Caco-2 (cell line): ENCODE measurements at regions of chr16 and their contacts with region 1.

Region 1: GRCh38 chr16:14529010-14529669 is 100.9 kb downstream of the PARN start:
- DNase-seq: peak; percentile 67 to 76
- H3K4me3 ChIP-seq: no peak overlapping the region
- H3K4me3 Mint-ChIP-seq: peak overlapping the region; percentile 32
- H3K27ac Mint-ChIP-seq: no peak overlapping the region
- H3K4me1 ChIP-seq: no peaks in the 10 kb centered on the region
- H3K4me1 Mint-ChIP-seq: peaks cover 6% of the 10 kb centered on the region
- H3K27me3 ChIP-seq: no peaks in the 10 kb centered on the region
- H3K27me3 Mint-ChIP-seq: no peaks in the 10 kb centered on the region
- CTCF ChIP-seq: peak; percentile 68 to 79

Region 2: DNA sequence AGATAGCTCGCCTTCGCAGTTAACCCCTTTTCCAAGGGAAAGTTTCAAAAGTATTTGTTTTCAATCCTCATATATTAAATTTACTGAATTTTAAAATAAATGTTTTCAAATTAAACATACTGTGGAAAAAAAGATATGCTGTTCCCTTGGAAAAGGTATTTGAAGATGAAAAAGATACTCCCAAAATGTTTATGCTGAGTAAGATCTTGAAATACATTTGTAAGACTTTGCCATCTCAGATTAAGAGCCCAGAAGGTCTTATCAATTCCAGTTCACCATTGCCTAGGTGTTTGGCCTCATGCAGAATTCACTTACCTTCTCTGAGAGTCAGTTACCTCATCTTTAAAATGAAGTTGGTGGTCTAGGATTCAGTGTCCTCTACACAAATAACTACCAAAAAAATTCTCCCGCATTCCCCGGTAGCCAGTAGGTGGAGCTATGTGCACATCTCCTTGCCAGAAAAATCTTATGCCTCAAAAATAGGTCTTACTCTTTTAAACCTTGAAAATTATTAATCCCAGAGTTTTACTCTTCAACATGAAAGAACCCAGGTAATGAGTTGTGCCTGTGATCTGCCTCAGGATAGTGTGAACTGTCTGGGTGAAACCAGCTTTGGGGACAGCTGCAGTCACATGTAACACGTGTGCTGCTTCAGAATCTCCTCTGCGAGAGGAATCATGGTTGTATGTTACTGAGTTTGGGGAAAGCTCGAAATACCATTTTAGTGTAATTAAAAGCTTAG is 279.7 kb before region 1 on chr16:
- CTCF ChIA-PET with region 1: no interaction called
- POLR2A ChIA-PET with region 1: no interaction called
- intact Hi-C with region 1: loop called (anchors 1 kb)
- DNase-seq: peak in 1 of 2 experiments; percentile 46
- H3K4me3 ChIP-seq: no peak overlapping the region
- H3K4me3 Mint-ChIP-seq: no peak overlapping the region
- H3K27ac Mint-ChIP-seq: no peak overlapping the region
- H3K4me1 ChIP-seq: no peaks in the 10 kb centered on the region
- H3K4me1 Mint-ChIP-seq: no peaks in the 10 kb centered on the region
- H3K27me3 ChIP-seq: no peaks in the 10 kb centered on the region
- H3K27me3 Mint-ChIP-seq: no peaks in the 10 kb centered on the region
- CTCF ChIP-seq: peak; percentile 69 to 81

Region 3: DNA sequence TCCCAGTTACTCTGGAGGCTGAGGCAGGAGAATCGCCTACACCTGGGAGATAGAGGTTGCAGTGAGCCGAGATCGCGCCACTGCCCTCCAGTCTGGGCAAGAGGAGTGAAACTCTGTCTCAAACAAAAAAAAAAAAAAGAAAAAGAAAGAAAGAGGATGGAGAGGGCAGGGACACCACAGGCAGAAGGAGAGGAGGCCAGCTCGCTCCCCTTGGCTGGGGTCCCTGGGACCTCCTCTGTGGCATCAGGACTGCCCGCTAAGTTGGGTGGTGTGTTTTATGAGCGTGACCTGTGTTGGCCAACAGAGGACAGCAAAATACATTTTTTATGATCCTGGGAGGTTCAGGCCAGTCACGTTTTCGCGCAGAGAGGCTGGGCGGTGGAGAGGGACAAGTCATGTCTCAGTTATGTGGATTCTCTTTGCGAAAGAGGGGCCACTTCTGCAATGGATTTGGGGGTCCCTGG is 228.4 kb before region 1 on chr16:
- CTCF ChIA-PET with region 1: no interaction called
- POLR2A ChIA-PET with region 1: no interaction called
- intact Hi-C with region 1: loop called (anchors 1 kb)
- DNase-seq: peak; percentile 70 to 71
- H3K4me3 ChIP-seq: peak overlapping the region; percentile 78
- H3K4me3 Mint-ChIP-seq: peak overlapping the region; percentile 75
- H3K27ac Mint-ChIP-seq: no peak overlapping the region
- H3K4me1 ChIP-seq: 0 out of 2 replicates have a peak, but pooled peaks cover 3% of the 10 kb centered on the region
- H3K4me1 Mint-ChIP-seq: no peaks in the 10 kb centered on the region
- H3K27me3 ChIP-seq: no peaks in the 10 kb centered on the region
- H3K27me3 Mint-ChIP-seq: no peaks in the 10 kb centered on the region
- CTCF ChIP-seq: peak; percentile 39 to 73

Region 4: GRCh38 chr16:14364386-14365204 is 164.5 kb before region 1 on chr16:
- CTCF ChIA-PET with region 1: no interaction called
- POLR2A ChIA-PET with region 1: no interaction called
- intact Hi-C with region 1: loop called (anchors 1 kb)
- DNase-seq: peak; percentile 72 to 83
- H3K4me3 ChIP-seq: peak overlapping the region; percentile 27
- H3K4me3 Mint-ChIP-seq: peak overlapping the region; percentile 72
- H3K27ac Mint-ChIP-seq: peak overlapping the region; percentile 79
- H3K4me1 ChIP-seq: peaks cover 11% of the 10 kb centered on the region
- H3K4me1 Mint-ChIP-seq: peaks cover 9% of the 10 kb centered on the region
- H3K27me3 ChIP-seq: no peaks in the 10 kb centered on the region
- H3K27me3 Mint-ChIP-seq: no peaks in the 10 kb centered on the region
- CTCF ChIP-seq: no peak

Region 5: GRCh38 chr16:14462811-14463210 is 66.3 kb before region 1 on chr16:
- CTCF ChIA-PET with region 1: no interaction called
- POLR2A ChIA-PET with region 1: no interaction called
- intact Hi-C with region 1: loop called (anchors 10 kb)
- DNase-seq: no peak
- H3K4me3 ChIP-seq: no peak overlapping the region
- H3K4me3 Mint-ChIP-seq: no peak overlapping the region
- H3K27ac Mint-ChIP-seq: no peak overlapping the region
- H3K4me1 ChIP-seq: no peaks in the 10 kb centered on the region
- H3K4me1 Mint-ChIP-seq: no peaks in the 10 kb centered on the region
- H3K27me3 ChIP-seq: no peaks in the 10 kb centered on the region
- H3K27me3 Mint-ChIP-seq: no peaks in the 10 kb centered on the region
- CTCF ChIP-seq: no peak